H1 (cell line): ENCODE measurements at regions of chr6 and their contacts with region 1.

Region 1: DNA sequence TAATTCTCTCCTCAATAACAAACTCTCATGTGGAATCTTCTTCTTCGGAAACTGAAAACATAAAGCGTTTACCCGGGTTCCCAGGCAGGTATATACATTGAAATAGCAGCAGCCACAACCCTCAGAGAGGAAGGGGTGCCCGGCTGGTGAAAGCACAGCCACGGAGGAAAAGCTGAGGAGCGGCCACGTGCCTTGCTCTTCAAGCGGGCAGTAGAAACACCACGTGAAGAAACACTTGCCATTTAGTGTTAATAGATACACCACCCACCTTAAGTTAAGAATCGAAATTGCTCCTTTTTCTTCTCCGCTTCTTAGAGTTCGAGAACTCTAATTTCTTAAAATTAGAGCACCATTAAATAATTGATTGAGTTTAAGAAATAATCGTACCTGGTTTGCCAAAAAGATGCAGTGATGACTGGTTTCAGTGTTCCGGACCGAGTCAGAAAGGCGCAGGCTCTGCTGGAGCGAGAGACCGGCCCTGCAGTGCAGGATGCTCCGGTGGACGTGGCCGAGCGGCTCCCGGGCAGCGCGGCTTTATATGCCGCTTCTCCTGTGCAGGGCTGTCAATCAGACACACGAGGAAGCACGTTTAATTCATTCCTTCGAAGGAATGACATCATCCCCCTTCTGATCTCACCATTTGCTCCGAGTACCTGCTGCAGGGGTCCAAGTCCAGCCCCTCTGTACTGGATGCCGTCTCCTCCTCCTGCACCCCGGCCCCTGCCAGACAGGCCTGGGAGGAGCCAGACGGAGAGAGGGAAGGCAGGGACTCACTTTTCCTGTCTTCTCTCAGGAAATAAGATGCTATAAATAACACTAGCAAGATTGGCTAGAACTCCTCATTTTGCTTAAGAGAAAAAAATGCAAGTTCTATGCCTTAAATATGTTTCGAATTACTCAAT is at the start of gene THBS2:
- DNase-seq: peak in 1 of 2 experiments; percentile 57
- H3K4me3 ChIP-seq: peak within 1 kb of the TSS; percentile 15 to 61 (median 52); a peak in 7 of 8 replicates
- H3K27ac ChIP-seq: no peak within 1 kb of the TSS
- H3K4me1 ChIP-seq: peaks cover 15 to 40% (median 23%) of the 10 kb centered on the region in 4 experiments
- H3K27me3 ChIP-seq: peaks cover 0 to 13% (median 9%) of the 10 kb centered on the region in 4 experiments; a peak in 5 of 7 replicates
- CTCF ChIP-seq: no peak
- EP300 ChIP-seq: no peak
- POLR2A ChIP-seq: no peak
- RAD21 ChIP-seq: no peak
- total RNA-seq, gene THBS2: 22.5 and 23.3 TPM in 2 replicates

Region 2: GRCh38 chr6:169131390-169131789 is 122.2 kb before region 1 on chr6:
- CTCF ChIA-PET with region 1: no interaction called
- POLR2A ChIA-PET with region 1: no interaction called
- DNase-seq: no peak
- H3K4me3 ChIP-seq: no peak overlapping the region
- H3K27ac ChIP-seq: no peak overlapping the region
- H3K4me1 ChIP-seq: peaks cover 0 to 5% (median 2%) of the 10 kb centered on the region in 4 experiments; a peak in 2 of 7 replicates
- H3K27me3 ChIP-seq: no peaks in the 10 kb centered on the region
- CTCF ChIP-seq: no peak
- EP300 ChIP-seq: no peak
- POLR2A ChIP-seq: no peak
- RAD21 ChIP-seq: no peak

Region 3: DNA sequence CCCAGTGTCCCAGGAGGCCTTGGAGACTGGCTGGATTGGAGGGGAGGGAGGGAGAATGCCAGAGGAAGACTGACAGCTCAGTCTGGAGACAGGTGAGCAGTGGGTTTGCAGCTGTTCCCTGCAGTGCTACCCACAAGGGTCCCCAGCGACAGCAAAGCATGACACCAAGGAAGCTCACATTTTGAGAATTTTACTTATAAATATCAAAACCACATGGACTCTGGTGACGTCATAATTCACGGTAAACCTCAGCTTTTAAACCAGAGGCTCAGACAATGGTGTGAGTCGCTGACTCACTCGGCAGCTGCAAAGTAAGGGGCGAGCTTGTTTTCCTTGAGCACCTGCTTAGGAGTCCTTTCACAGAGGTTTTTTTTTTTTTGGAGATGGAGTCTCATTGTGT is 65.1 kb before region 1 on chr6:
- CTCF ChIA-PET with region 1: no interaction called
- POLR2A ChIA-PET with region 1: no interaction called
- DNase-seq: no peak
- H3K4me3 ChIP-seq: no peak overlapping the region
- H3K27ac ChIP-seq: no peak overlapping the region
- H3K4me1 ChIP-seq: 0 out of 7 replicates have a peak, but pooled peaks cover 0 to 3% (median 0%) of the 10 kb centered on the region in 4 experiments
- H3K27me3 ChIP-seq: no peaks in the 10 kb centered on the region
- CTCF ChIP-seq: no peak
- EP300 ChIP-seq: no peak
- POLR2A ChIP-seq: no peak
- RAD21 ChIP-seq: no peak

Region 4: GRCh38 chr6:169240591-169241390 is 12.8 kb before region 1 on chr6:
- CTCF ChIA-PET with region 1: interaction called, 6 read pairs
- POLR2A ChIA-PET with region 1: interaction called, 14 read pairs
- DNase-seq: no peak
- H3K4me3 ChIP-seq: no peak overlapping the region
- H3K27ac ChIP-seq: no peak overlapping the region
- H3K4me1 ChIP-seq: no peaks in the 10 kb centered on the region; a peak in 1 of 7 replicates
- H3K27me3 ChIP-seq: no peaks in the 10 kb centered on the region
- CTCF ChIP-seq: no peak
- EP300 ChIP-seq: no peak
- POLR2A ChIP-seq: no peak
- RAD21 ChIP-seq: no peak

Region 5: GRCh38 chr6:169263836-169264608 is 10.4 kb after region 1 on chr6:
- CTCF ChIA-PET with region 1: interaction called, 4 read pairs
- POLR2A ChIA-PET with region 1: interaction called, 12 read pairs
- DNase-seq: no peak
- H3K4me3 ChIP-seq: no peak overlapping the region
- H3K27ac ChIP-seq: no peak overlapping the region
- H3K4me1 ChIP-seq: no peaks in the 10 kb centered on the region; a peak in 1 of 7 replicates
- H3K27me3 ChIP-seq: no peaks in the 10 kb centered on the region
- CTCF ChIP-seq: no peak
- EP300 ChIP-seq: no peak
- POLR2A ChIP-seq: no peak
- RAD21 ChIP-seq: no peak

Region 6: GRCh38 chr6:169340395-169340794 is 86.8 kb after region 1 on chr6:
- CTCF ChIA-PET with region 1: no interaction called
- POLR2A ChIA-PET with region 1: no interaction called
- DNase-seq: no peak
- H3K4me3 ChIP-seq: no peak overlapping the region
- H3K27ac ChIP-seq: no peak overlapping the region
- H3K4me1 ChIP-seq: no peaks in the 10 kb centered on the region; a peak in 1 of 7 replicates
- H3K27me3 ChIP-seq: no peaks in the 10 kb centered on the region
- CTCF ChIP-seq: no peak
- EP300 ChIP-seq: no peak
- POLR2A ChIP-seq: no peak
- RAD21 ChIP-seq: no peak